GM12878 (cell line): ENCODE measurements at regions of chr5 and their contacts with region 1.

Region 1: GRCh38 chr5:156929366-156929948 is 33.6 kb downstream of the TIMD4 start:
- DNase-seq: no peak
- ATAC-seq: no peak; the same call in 2 of the 3 replicates
- H3K4me3 ChIP-seq: no peak overlapping the region
- H3K27ac ChIP-seq: peak overlapping the region; percentile 45
- H3K4me1 ChIP-seq: peaks cover 46% of the 10 kb centered on the region
- H3K27me3 ChIP-seq: no peaks in the 10 kb centered on the region
- CTCF ChIP-seq: no peak
- EP300 ChIP-seq: no peak
- POLR2A ChIP-seq: no peak
- RAD21 ChIP-seq: no peak

Region 2: GRCh38 chr5:156893517-156893916 is 35.9 kb before region 1 on chr5:
- CTCF ChIA-PET with region 1: interaction called, 16 read pairs
- POLR2A ChIA-PET with region 1: interaction called, 6 read pairs
- RAD21 ChIA-PET with region 1: interaction called, 22 read pairs
- SMC1A ChIA-PET with region 1: interaction called, 104 read pairs
- in situ Hi-C with region 1: no loop called
- intact Hi-C with region 1: loop called (anchors 2 kb)
- DNase-seq: peak; percentile 52
- ATAC-seq: peak; percentile 82
- H3K4me3 ChIP-seq: no peak overlapping the region
- H3K27ac ChIP-seq: peak overlapping the region; percentile 47; the same call in 1 of the 2 replicates
- H3K4me1 ChIP-seq: peaks cover 23% of the 10 kb centered on the region
- H3K27me3 ChIP-seq: no peaks in the 10 kb centered on the region
- CTCF ChIP-seq: no peak
- EP300 ChIP-seq: peak in 1 of 2 experiments; percentile 51; a peak in 1 of 4 replicates
- POLR2A ChIP-seq: no peak
- RAD21 ChIP-seq: no peak

Region 3: GRCh38 chr5:156913719-156914370 is 15.6 kb before region 1 on chr5:
- CTCF ChIA-PET with region 1: interaction called, 76 read pairs
- POLR2A ChIA-PET with region 1: interaction called, 81 read pairs
- RAD21 ChIA-PET with region 1: interaction called, 82 read pairs
- SMC1A ChIA-PET with region 1: interaction called, 228 read pairs
- in situ Hi-C with region 1: no loop called
- intact Hi-C with region 1: no loop called
- DNase-seq: peak; percentile 68
- ATAC-seq: peak; percentile 87
- H3K4me3 ChIP-seq: peak overlapping the region; percentile 46; the same call in 1 of the 2 replicates
- H3K27ac ChIP-seq: peak overlapping the region; percentile 89
- H3K4me1 ChIP-seq: peaks cover 17% of the 10 kb centered on the region
- H3K27me3 ChIP-seq: no peaks in the 10 kb centered on the region
- CTCF ChIP-seq: no peak
- EP300 ChIP-seq: no peak
- POLR2A ChIP-seq: no peak
- RAD21 ChIP-seq: no peak

Region 4: GRCh38 chr5:156942064-156942463 is 12.6 kb after region 1 on chr5:
- CTCF ChIA-PET with region 1: interaction called, 76 read pairs
- POLR2A ChIA-PET with region 1: interaction called, 5 read pairs
- RAD21 ChIA-PET with region 1: interaction called, 4 read pairs
- SMC1A ChIA-PET with region 1: interaction called, 228 read pairs
- in situ Hi-C with region 1: no loop called
- intact Hi-C with region 1: no loop called
- DNase-seq: no peak
- ATAC-seq: peak; percentile 95
- H3K4me3 ChIP-seq: peak overlapping the region; percentile 8; the same call in 1 of the 2 replicates
- H3K27ac ChIP-seq: peak overlapping the region; percentile 52
- H3K4me1 ChIP-seq: peaks cover 17% of the 10 kb centered on the region
- H3K27me3 ChIP-seq: no peaks in the 10 kb centered on the region
- CTCF ChIP-seq: no peak
- EP300 ChIP-seq: no peak
- POLR2A ChIP-seq: no peak
- RAD21 ChIP-seq: no peak

Region 5: GRCh38 chr5:158796812-158797497 is 1867.5 kb after region 1 on chr5:
- CTCF ChIA-PET with region 1: no interaction called
- POLR2A ChIA-PET with region 1: no interaction called
- RAD21 ChIA-PET with region 1: no interaction called
- SMC1A ChIA-PET with region 1: no interaction called
- in situ Hi-C with region 1: no loop called
- intact Hi-C with region 1: no loop called
- DNase-seq: no peak
- ATAC-seq: no peak
- H3K4me3 ChIP-seq: no peak overlapping the region
- H3K27ac ChIP-seq: no peak overlapping the region
- H3K4me1 ChIP-seq: no peaks in the 10 kb centered on the region
- H3K27me3 ChIP-seq: no peaks in the 10 kb centered on the region
- CTCF ChIP-seq: no peak
- EP300 ChIP-seq: no peak
- POLR2A ChIP-seq: no peak
- RAD21 ChIP-seq: no peak